Mammary epithelial cell (primary cell): ENCODE measurements at regions of chr1 and their contacts with region 1.

Region 1: GRCh38 chr1:20233394-20233793 is 47.1 kb upstream of the PLA2G2C start:
- DNase-seq: peak; percentile 11
- H3K4me3 ChIP-seq: no peak overlapping the region
- H3K27ac ChIP-seq: no peak overlapping the region
- H3K4me1 ChIP-seq: peaks cover 36% of the 10 kb centered on the region
- H3K27me3 ChIP-seq: no peaks in the 10 kb centered on the region
- CTCF ChIP-seq: peak; percentile 42 to 50

Region 2: DNA sequence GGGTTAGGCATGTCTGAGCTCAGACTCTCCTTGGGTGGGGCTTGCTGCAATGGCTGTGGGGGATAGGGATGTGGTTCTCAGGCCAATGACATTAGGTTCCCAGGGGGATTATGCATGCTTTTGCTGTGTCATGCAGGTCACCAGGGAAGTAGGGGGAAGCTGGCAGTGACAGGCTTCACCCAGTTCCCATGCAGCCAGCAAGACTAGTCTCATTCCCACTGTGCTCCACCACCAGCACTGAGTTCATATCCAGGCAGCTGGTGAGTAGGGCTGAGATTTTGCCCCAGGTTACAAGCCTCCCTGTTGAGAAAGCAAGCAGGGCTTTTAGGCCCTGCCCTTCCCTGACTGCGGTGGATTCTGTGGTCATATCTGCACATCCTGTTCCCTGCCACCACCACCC is 195.5 kb before region 1 on chr1:
- CTCF ChIA-PET with region 1: no interaction called
- dilution Hi-C with region 1: no loop called
- in situ Hi-C with region 1: no loop called
- intact Hi-C with region 1: no loop called
- DNase-seq: peak; percentile 96
- H3K4me3 ChIP-seq: no peak overlapping the region
- H3K27ac ChIP-seq: peak overlapping the region; percentile 41
- H3K4me1 ChIP-seq: peaks cover 38% of the 10 kb centered on the region
- H3K27me3 ChIP-seq: no peaks in the 10 kb centered on the region
- CTCF ChIP-seq: no peak

Region 3: DNA sequence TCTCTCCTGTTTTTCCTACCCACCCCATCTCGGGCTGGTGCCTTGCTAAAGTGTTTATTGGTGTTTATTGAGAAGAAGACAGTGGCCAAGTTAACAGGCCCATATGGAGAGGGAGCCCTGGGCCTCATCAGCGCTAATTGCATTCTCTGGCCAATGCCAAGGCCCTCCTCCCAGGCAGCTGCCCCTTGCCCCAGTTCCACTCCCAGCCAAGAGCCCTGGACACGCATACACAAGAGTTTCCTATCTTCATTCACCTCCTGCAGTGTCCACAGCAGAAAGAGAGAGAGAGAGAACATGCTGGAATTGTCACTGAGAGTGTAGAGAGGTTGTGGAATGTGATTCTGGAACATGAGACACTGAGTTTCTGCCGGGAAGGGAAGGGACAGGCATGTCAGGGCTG is 31.9 kb after region 1 on chr1:
- CTCF ChIA-PET with region 1: no interaction called
- dilution Hi-C with region 1: no loop called
- in situ Hi-C with region 1: no loop called
- intact Hi-C with region 1: loop called (anchors 2 kb)
- DNase-seq: no peak
- H3K4me3 ChIP-seq: no peak overlapping the region
- H3K27ac ChIP-seq: no peak overlapping the region
- H3K4me1 ChIP-seq: no peaks in the 10 kb centered on the region
- H3K27me3 ChIP-seq: no peaks in the 10 kb centered on the region
- CTCF ChIP-seq: no peak

Region 4: DNA sequence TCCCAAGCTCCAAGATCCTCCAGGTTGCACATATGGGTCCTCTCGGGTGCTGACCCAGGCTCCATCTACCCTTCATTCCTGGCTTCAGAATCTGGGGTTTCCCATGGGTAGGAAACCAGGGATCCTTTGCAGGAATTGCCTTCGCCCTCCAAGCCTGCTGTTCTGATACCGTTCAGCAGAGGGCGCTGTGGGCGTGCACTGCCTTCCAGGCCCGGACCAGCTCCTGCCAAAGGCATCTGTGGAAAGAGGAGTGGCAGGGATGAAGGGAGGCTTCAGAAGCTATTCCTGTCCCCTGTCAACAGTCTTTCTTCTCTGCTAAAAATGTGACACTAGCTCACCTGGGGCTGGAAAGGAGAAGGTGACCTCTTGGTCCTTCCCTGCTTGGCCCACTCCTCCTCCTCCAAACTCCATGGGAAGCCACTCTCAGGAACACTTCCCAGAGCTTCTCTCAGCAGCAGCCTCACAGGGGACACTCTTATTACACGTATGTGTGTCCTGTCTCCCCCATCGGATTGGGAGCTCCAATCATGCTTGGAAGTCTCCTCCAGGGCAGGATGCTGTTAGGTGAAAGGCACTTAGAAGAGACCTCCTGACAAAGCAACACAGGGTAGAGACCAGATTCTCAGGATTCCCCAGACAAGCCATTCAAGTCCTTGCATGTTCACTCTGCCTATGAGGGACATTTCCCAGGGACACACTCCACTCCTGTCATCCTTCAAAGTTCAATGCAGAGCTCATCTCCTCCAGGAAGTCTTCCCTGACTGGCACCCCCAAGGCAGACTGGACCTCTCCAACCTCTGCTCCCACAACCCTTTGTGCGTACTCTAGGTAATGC is 128.6 kb after region 1 on chr1:
- CTCF ChIA-PET with region 1: no interaction called
- dilution Hi-C with region 1: no loop called
- in situ Hi-C with region 1: no loop called
- intact Hi-C with region 1: loop called (anchors 5 kb)
- DNase-seq: peak; percentile 55
- H3K4me3 ChIP-seq: no peak overlapping the region
- H3K27ac ChIP-seq: no peak overlapping the region
- H3K4me1 ChIP-seq: peaks cover 41% of the 10 kb centered on the region
- H3K27me3 ChIP-seq: peaks cover 5% of the 10 kb centered on the region
- CTCF ChIP-seq: peak; percentile 95 to 98